Left cardiac atrium (tissue), 4 donors: ENCODE measurements at regions of chr2 and their contacts with region 1.

Region 1: GRCh38 chr2:112749755-112750559 is 14.5 kb downstream of the CKAP2L start:
- DNase-seq: peak; percentile 73
- ATAC-seq: peak; percentile 77 to 80

Region 2: GRCh38 chr2:112884869-112885505 is 135.0 kb after region 1 on chr2:
- intact Hi-C with region 1: loop called in 1 of 2 experiments (anchors 5 kb)
- DNase-seq: no peak
- ATAC-seq: peak; percentile 41 to 55

Region 3: GRCh38 chr2:112941753-112942658 is 192.0 kb after region 1 on chr2:
- intact Hi-C with region 1: loop called (anchors 5 to 10 kb)
- DNase-seq: peak; percentile 63
- ATAC-seq: peak; percentile 53 to 70

Region 4: DNA sequence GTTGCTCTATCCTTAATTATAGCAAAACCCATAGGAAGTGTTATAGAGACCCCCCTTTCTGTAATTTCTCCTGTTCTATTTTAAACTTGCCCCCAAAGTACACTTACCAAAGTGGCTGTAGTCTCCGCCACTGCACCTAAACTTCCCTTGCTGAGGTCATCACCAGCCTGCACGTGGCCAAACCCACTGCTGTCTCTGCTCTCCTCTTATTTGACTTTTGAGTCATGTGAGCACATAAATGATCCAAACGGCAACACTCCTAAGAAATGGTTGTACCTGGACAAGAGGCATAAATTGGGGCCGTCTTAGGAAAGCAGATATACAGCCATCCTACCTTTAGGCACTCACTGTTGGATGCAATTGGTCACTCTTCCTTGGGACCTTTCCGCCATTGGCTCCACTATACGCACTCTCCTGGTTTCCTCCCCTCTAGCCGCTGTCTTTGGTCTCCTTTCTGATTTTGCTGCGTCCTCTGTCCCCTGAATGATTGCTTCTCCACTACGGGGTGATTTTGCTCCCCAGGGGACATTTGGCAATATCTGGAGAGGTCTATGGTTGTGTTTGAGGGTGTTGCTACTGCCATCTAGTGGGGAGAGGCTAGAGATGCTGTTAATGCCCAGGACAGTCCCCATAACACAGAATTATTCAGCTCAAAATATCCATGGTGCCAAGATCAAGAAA is 208.6 kb after region 1 on chr2:
- intact Hi-C with region 1: loop called in 1 of 2 experiments (anchors 2 kb)
- DNase-seq: no peak
- ATAC-seq: peak; percentile 70 to 79